Naive thymus-derived CD4-positive, alpha-beta T cell (primary cell): ENCODE measurements at regions of chr2 and their contacts with region 1.

Region 1: GRCh38 chr2:13006829-13007717 is 290.3 kb downstream of the TRIB2 start:
- DNase-seq: peak; percentile 31 to 70 (median 55)
- ATAC-seq: peak; percentile 66
- H3K4me3 ChIP-seq: no peak overlapping the region
- H3K4me3 Mint-ChIP-seq: no peak overlapping the region
- H3K27ac ChIP-seq: no peak overlapping the region
- H3K27ac Mint-ChIP-seq: peak overlapping the region in 1 of 9 donors; percentile 5
- H3K4me1 ChIP-seq: no peaks in the 10 kb centered on the region
- H3K4me1 Mint-ChIP-seq: peaks cover 0 to 9% (median 0%) of the 10 kb centered on the region in 7 donors
- H3K27me3 ChIP-seq: no peaks in the 10 kb centered on the region
- H3K27me3 Mint-ChIP-seq: peaks cover 5 to 52% (median 11%) of the 10 kb centered on the region in 5 donors

Region 2: DNA sequence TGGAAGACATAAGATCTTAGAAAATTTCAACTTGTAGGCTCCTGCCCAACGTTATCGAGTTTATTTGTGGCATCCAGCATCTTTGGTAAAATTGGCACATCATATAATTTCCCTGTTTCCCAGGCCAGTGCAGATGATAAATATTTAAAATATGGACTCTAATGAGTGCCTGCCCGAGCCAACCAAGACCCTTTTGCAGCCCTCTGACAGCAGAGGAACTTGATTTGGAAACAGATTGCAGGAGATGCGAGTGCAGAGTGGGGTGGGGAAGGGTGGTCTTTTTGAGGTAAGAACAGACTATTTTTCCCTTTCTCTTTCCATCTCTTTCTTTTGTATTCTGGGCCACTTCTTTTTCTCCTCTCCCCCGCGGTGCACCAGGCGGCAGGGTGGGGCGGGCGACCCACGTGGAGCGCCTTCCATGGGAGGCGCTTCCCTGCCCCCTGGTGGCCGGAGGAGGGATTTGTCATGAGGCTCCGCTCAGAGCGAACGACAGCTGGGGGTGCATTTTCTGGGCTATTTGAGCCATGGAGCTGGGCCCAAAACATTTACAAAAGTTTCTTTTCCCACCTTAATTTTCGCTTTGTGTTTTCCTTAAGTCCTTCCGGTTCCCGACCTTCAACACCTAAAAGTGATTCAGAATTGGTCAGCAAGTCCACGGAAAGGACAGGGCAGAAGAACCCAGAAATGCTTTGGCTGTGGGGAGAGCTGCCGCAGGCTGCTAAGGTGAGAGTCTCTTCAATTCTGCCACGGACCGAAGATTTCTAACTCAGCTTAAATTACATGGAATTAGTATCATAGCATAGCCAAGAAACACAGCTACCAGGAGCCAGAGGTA is 1227.9 kb before region 1 on chr2:
- CTCF ChIA-PET with region 1: interaction called, 10 read pairs
- POLR2A ChIA-PET with region 1: no interaction called
- intact Hi-C with region 1: no loop called
- DNase-seq: peak; percentile 66 to 88 (median 83)
- ATAC-seq: peak; percentile 98
- H3K4me3 ChIP-seq: peak overlapping the region; percentile 32
- H3K4me3 Mint-ChIP-seq: peak overlapping the region; percentile 53 to 80 (median 71)
- H3K27ac ChIP-seq: no peak overlapping the region
- H3K27ac Mint-ChIP-seq: peak overlapping the region; percentile 0 to 88 (median 73)
- H3K4me1 ChIP-seq: peaks cover 13 to 15% of the 10 kb centered on the region in 2 donors
- H3K4me1 Mint-ChIP-seq: peaks cover 23 to 51% (median 41%) of the 10 kb centered on the region in 7 donors
- H3K27me3 ChIP-seq: no peaks in the 10 kb centered on the region
- H3K27me3 Mint-ChIP-seq: no peaks in the 10 kb centered on the region

Region 3: DNA sequence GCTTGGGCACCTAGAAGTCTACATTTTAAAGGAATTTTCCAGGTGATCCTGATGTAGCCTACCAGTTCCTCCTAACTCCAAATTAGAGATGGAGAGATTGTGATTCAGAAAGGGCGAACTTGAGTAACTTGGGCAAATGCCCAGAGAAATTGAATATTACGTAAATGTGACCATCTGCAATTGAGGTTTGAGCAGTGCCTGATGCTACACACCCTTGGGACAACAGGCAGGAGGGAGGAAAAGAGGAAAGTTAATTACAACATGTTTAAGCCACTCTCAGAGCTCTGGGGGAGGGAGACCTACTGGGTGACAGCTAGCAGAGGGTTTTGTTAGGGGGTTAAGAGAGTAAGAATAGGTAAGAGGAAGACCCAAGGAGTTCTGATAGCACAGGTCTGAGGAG is 1051.8 kb before region 1 on chr2:
- CTCF ChIA-PET with region 1: no interaction called
- POLR2A ChIA-PET with region 1: no interaction called
- intact Hi-C with region 1: loop called in 1 of 2 experiments (anchors 1 kb)
- DNase-seq: no peak
- ATAC-seq: no peak
- H3K4me3 ChIP-seq: no peak overlapping the region
- H3K4me3 Mint-ChIP-seq: no peak overlapping the region
- H3K27ac ChIP-seq: no peak overlapping the region
- H3K27ac Mint-ChIP-seq: peak overlapping the region in 1 of 9 donors; percentile 32
- H3K4me1 ChIP-seq: peaks cover 0 to 5% of the 10 kb centered on the region in 2 donors
- H3K4me1 Mint-ChIP-seq: peaks cover 0 to 10% (median 9%) of the 10 kb centered on the region in 7 donors
- H3K27me3 ChIP-seq: no peaks in the 10 kb centered on the region
- H3K27me3 Mint-ChIP-seq: peaks cover 0 to 41% (median 14%) of the 10 kb centered on the region in 5 donors

Region 4: DNA sequence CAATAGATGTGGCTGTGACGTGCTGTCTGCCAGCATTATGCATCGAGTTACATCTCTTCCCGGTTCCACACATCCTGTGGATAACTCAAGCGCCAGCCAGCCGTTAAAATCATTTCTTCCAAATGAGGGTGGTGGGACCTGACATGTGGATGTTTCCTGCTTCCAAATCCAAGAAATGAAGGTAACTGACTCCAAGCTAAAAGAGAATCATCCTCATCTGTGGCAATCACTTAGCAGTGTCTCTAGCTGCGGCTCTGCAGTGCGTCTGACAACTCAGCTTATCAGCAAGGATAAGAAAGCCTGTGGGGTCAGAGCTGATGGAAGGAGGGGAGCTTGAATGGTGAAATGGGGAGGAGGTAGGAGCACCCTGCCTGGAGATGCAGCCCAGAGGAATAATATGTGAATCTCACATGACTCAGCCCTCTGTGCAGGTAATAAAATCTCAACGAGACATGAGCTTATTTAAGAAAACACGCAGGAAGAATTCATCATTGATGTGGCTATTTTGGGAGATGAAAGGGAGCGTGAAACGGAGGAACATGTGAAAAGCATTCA is 672.6 kb before region 1 on chr2:
- CTCF ChIA-PET with region 1: no interaction called
- POLR2A ChIA-PET with region 1: no interaction called
- intact Hi-C with region 1: loop called in 1 of 2 experiments (anchors 1 kb)
- DNase-seq: peak in 6 of 9 donors; percentile 36 to 64 (median 56)
- ATAC-seq: peak; percentile 60
- H3K4me3 ChIP-seq: no peak overlapping the region
- H3K4me3 Mint-ChIP-seq: peak overlapping the region in 9 of 10 donors; percentile 22 to 80 (median 65)
- H3K27ac ChIP-seq: no peak overlapping the region
- H3K27ac Mint-ChIP-seq: peak overlapping the region in 3 of 9 donors; percentile 21 to 48 (median 34)
- H3K4me1 ChIP-seq: peaks cover 0 to 16% of the 10 kb centered on the region in 2 donors
- H3K4me1 Mint-ChIP-seq: peaks cover 0 to 13% (median 6%) of the 10 kb centered on the region in 7 donors
- H3K27me3 ChIP-seq: no peaks in the 10 kb centered on the region
- H3K27me3 Mint-ChIP-seq: peaks cover 0 to 25% (median 5%) of the 10 kb centered on the region in 5 donors

Region 5: DNA sequence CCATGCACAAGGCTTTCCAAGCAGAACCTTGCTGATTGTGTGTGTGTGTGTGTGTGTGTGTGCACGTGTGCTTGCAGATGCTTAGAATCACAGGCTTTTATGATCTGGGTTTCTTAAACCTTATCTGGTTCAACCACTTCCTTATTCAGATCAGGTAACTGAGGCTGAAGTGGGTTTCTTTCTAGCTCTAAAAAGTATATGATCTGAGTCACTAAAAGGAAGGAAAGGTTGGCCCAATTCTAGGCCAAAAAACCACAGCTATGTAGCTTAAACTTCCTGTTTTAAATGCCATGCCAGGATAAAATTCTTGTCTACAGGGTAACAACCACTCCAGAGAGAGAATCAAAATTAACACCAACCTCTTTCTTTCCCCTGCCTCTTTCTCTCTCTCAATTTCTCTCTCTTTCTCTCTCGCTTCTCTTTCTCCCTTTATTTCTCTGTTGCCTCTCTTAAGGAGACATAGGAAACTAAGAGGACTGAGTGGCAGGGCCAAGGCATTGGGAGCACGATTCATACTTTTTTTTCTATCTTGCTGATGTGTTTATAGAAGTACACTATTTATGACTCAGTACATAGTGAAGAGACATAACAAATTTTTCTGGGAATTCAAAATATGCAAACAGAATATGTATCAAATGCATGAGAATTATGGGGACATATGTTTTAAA is 150.0 kb before region 1 on chr2:
- CTCF ChIA-PET with region 1: no interaction called
- POLR2A ChIA-PET with region 1: no interaction called
- intact Hi-C with region 1: loop called in 1 of 2 experiments (anchors 5 kb)
- DNase-seq: peak in 7 of 9 donors; percentile 46 to 81 (median 73)
- ATAC-seq: peak; percentile 91
- H3K4me3 ChIP-seq: peak overlapping the region; percentile 1
- H3K4me3 Mint-ChIP-seq: no peak overlapping the region
- H3K27ac ChIP-seq: no peak overlapping the region
- H3K27ac Mint-ChIP-seq: peak overlapping the region in 1 of 9 donors; percentile 2
- H3K4me1 ChIP-seq: peaks cover 40 to 56% of the 10 kb centered on the region in 2 donors
- H3K4me1 Mint-ChIP-seq: peaks cover 0 to 25% (median 14%) of the 10 kb centered on the region in 7 donors
- H3K27me3 ChIP-seq: no peaks in the 10 kb centered on the region
- H3K27me3 Mint-ChIP-seq: peaks cover 6 to 12% (median 10%) of the 10 kb centered on the region in 5 donors

Region 6: DNA sequence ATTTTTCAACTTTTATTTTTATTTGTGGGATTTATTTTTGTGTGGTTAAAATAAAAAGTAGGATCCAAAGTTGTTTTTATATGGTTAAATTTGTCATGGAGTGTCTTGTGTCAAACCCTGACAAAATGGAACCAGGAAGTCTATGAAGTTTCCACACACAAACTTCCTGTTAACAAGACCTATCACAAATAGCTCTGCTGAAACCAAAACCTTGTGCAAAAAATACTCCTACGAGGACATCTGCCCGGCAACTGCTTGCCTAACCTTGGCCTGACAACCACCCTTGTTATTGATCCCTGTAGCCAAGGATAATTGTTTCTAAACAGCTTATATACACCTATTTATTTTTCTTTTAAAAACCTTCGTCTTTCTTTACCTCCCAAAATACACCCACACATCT is 99.2 kb after region 1 on chr2:
- CTCF ChIA-PET with region 1: no interaction called
- POLR2A ChIA-PET with region 1: no interaction called
- intact Hi-C with region 1: no loop called
- DNase-seq: no peak
- ATAC-seq: no peak
- H3K4me3 ChIP-seq: no peak overlapping the region
- H3K4me3 Mint-ChIP-seq: no peak overlapping the region
- H3K27ac ChIP-seq: no peak overlapping the region
- H3K27ac Mint-ChIP-seq: no peak overlapping the region
- H3K4me1 ChIP-seq: no peaks in the 10 kb centered on the region
- H3K4me1 Mint-ChIP-seq: peaks cover 0 to 2% (median 0%) of the 10 kb centered on the region in 7 donors
- H3K27me3 ChIP-seq: no peaks in the 10 kb centered on the region
- H3K27me3 Mint-ChIP-seq: peaks cover 0 to 52% (median 23%) of the 10 kb centered on the region in 5 donors